ENCODE measurements at regions of chr10 and their contacts with region 1.

Region 1: DNA sequence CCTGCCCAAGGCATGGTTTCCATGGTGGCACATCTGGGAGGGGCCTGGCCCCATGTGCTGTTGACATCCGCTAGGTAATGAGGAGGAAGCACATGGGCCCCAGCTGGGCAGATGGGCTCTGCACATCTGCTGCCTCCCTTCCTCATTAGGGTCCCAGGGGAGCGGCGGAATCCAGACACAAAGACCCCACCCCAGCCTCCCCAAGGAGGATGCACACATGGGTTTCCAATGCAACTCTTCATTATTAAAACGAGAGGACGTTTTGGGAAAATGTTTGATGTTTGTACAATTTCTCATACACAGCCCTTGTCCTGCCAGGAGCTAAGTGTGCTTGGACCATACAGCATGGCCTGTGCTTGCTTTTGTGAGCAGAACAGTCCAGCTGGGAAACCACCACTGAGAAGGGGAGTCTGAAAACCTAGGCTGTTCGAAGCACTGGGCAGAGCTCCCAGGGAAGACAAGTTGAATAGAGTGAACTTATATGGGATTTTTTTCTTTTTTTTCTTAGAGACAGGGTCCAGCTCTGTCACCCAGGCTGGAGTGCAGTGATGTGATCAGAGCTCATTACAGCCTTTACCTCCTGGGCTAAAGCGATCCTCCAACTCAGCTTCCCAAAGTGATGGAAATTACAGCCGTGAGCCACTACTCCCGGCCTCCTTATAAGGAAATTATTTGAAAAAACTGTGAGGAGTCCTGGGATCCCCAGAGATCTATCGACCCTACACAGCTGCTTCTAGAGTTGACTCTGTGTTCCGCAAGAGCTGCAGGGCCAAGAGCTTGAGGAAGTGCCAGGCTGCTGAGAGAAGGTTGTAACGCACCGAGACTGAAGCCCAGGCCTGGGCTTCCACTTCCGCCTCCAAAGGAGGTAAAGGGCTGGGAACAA is 23.4 kb downstream of the FAM107B start:
- DNase-seq: peak; percentile 85
- ATAC-seq: peak; percentile 80
- H3K4me3 ChIP-seq: peak overlapping the region in 3 of 5 experiments; percentile 6 to 30 (median 13)
- H3K4me3 Mint-ChIP-seq: peak overlapping the region; percentile 81
- H3K27ac ChIP-seq: peak overlapping the region; percentile 84 to 96
- H3K27ac Mint-ChIP-seq: peak overlapping the region; percentile 98
- H3K4me1 ChIP-seq: peaks cover 48 to 58% of the 10 kb centered on the region in 2 donors
- H3K4me1 Mint-ChIP-seq: peaks cover 62% of the 10 kb centered on the region
- H3K27me3 ChIP-seq: no peaks in the 10 kb centered on the region
- H3K27me3 Mint-ChIP-seq: no peaks in the 10 kb centered on the region
- CTCF ChIP-seq: no peak

Region 2: GRCh38 chr10:14705548-14706230 is 45.6 kb before region 1 on chr10:
- CTCF ChIA-PET with region 1: no interaction called
- POLR2A ChIA-PET with region 1: interaction called, 3 read pairs
- intact Hi-C with region 1: loop called (anchors 5 kb)
- DNase-seq: peak; percentile 62
- ATAC-seq: peak; percentile 88
- H3K4me3 ChIP-seq: no peak overlapping the region
- H3K4me3 Mint-ChIP-seq: peak overlapping the region; percentile 50
- H3K27ac ChIP-seq: no peak overlapping the region
- H3K27ac Mint-ChIP-seq: peak overlapping the region; percentile 18
- H3K4me1 ChIP-seq: peaks cover 11 to 14% of the 10 kb centered on the region in 2 donors
- H3K4me1 Mint-ChIP-seq: peaks cover 13% of the 10 kb centered on the region
- H3K27me3 ChIP-seq: no peaks in the 10 kb centered on the region
- H3K27me3 Mint-ChIP-seq: no peaks in the 10 kb centered on the region
- CTCF ChIP-seq: no peak

Region 3: DNA sequence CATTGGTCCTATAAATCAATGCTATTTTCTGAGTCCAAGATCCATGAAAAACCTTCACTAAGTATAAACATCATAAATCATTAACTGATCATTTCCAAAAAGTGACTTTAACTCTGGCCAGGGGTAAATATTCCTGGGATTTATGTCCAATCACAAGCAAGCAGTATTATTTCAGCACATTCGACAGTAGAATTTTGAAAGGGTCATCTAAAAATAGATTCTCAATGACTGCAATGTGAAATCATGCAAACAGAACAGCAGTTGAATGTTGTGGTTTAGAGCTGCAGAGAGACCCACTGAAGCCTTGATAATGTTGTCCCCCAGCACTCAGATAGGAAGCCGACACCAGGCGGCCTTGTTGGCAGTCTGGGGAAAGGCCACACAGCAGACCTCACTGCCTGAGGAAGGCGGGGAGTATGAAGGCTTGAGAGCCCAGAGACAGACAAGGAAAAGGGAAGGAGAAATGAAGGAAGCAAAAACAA is 14.6 kb before region 1 on chr10:
- CTCF ChIA-PET with region 1: interaction called, 47 read pairs
- POLR2A ChIA-PET with region 1: interaction called, 54 read pairs
- intact Hi-C with region 1: loop called (anchors 1 kb)
- DNase-seq: peak; percentile 76
- ATAC-seq: peak; percentile 78
- H3K4me3 ChIP-seq: peak overlapping the region in 1 of 5 experiments; percentile 6
- H3K4me3 Mint-ChIP-seq: peak overlapping the region; percentile 73
- H3K27ac ChIP-seq: peak overlapping the region; percentile 84
- H3K27ac Mint-ChIP-seq: peak overlapping the region; percentile 95
- H3K4me1 ChIP-seq: peaks cover 64 to 70% of the 10 kb centered on the region in 2 donors
- H3K4me1 Mint-ChIP-seq: peaks cover 68% of the 10 kb centered on the region
- H3K27me3 ChIP-seq: no peaks in the 10 kb centered on the region
- H3K27me3 Mint-ChIP-seq: no peaks in the 10 kb centered on the region
- CTCF ChIP-seq: no peak

Region 4: DNA sequence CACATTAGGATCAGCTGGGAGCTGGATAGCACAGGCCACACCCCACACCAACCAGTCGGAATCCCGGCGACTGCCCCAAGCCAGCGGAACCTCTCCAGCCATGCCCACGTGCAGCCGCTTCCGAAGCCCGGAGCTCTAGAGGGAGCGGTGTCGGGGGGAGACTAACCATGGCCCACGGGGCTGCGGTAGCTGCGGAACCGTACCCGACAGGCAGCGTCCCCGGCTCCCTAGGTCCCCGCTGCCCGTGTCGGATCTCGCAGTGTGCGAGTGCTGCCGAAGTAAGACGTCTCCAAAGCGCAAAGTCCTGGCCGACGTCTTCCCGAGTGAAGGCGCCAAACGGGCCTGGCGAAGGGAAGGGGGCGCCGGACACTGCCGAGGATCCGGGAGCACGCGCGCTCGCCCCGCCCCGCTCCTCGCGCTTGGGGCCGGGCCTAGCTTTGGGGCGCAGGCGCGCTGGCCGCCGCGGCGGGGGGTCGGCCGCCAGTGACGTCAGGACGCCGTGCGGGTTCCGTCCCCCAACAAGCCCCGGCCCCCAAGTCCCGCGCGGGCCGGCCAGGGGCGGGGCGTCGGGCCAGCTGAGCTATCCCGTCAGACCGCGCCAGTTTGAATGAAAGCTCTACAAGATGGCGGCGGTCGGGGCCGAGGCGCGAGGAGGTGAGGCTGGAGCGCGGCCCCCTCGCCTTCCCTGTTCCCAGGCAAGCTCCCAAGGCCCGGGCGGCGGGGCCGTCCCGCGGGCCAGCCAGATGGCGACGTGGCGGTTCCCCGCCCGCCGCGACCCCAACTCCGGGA is 127.2 kb after region 1 on chr10 and contains the start of gene SUV39H2:
- CTCF ChIA-PET with region 1: no interaction called
- POLR2A ChIA-PET with region 1: no interaction called
- intact Hi-C with region 1: loop called (anchors 5 kb)
- DNase-seq: peak; percentile 96
- ATAC-seq: peak; percentile 92
- H3K4me3 ChIP-seq: peak within 1 kb of the TSS; percentile 53 to 98 (median 94)
- H3K4me3 Mint-ChIP-seq: peak within 1 kb of the TSS; percentile 96
- H3K27ac ChIP-seq: peak within 1 kb of the TSS; percentile 64 to 80
- H3K27ac Mint-ChIP-seq: peak within 1 kb of the TSS; percentile 87
- H3K4me1 ChIP-seq: peaks cover 17 to 23% of the 10 kb centered on the region in 2 donors
- H3K4me1 Mint-ChIP-seq: peaks cover 28% of the 10 kb centered on the region
- H3K27me3 ChIP-seq: peaks cover 0 to 6% (median 0%) of the 10 kb centered on the region in 4 experiments
- H3K27me3 Mint-ChIP-seq: no peaks in the 10 kb centered on the region
- CTCF ChIP-seq: no peak
- total RNA-seq, gene SUV39H2: 3.2 and 3.5 TPM in 2 replicates

Measured in B cell (primary cell).